ENCODE measurements at regions of chr7 and their contacts with region 1.

Region 1: GRCh38 chr7:101165075-101165957 is at the start of gene VGF:
- DNase-seq: peak; percentile 97
- H3K4me3 ChIP-seq: peak within 1 kb of the TSS; percentile 56 to 61
- H3K27ac ChIP-seq: peak within 1 kb of the TSS in 1 of 2 experiments; percentile 94; a peak in 3 of 4 replicates
- H3K4me1 ChIP-seq: peaks cover 36 to 66% of the 10 kb centered on the region in 2 experiments
- H3K27me3 ChIP-seq: no peaks in the 10 kb centered on the region
- CTCF ChIP-seq: no peak
- EP300 ChIP-seq: peak in 1 of 2 experiments; percentile 12; a peak in 1 of 4 replicates
- RAD21 ChIP-seq: no peak
- polyA plus RNA-seq, gene VGF: 17.4 and 54.3 TPM in 2 replicates

Region 2: GRCh38 chr7:101153969-101154692 is 11.2 kb before region 1 on chr7 and contains the start of gene AP1S1:
- CTCF ChIA-PET with region 1: interaction called, 20 read pairs
- POLR2A ChIA-PET with region 1: interaction called, 43 read pairs
- DNase-seq: peak; percentile 100
- H3K4me3 ChIP-seq: peak within 1 kb of the TSS; percentile 65 to 88
- H3K27ac ChIP-seq: peak within 1 kb of the TSS; percentile 38 to 84
- H3K4me1 ChIP-seq: peaks cover 7 to 15% of the 10 kb centered on the region in 2 experiments; a peak in 2 of 4 replicates
- H3K27me3 ChIP-seq: no peaks in the 10 kb centered on the region
- CTCF ChIP-seq: no peak
- EP300 ChIP-seq: peak in 1 of 2 experiments; percentile 52; a peak in 3 of 4 replicates
- RAD21 ChIP-seq: no peak; the same call in 1 of the 2 replicates
- polyA plus RNA-seq, gene AP1S1: 616 and 704 TPM in 2 replicates

Region 3: GRCh38 chr7:101179118-101179517 is 13.8 kb after region 1 on chr7:
- CTCF ChIA-PET with region 1: interaction called, 20 read pairs
- POLR2A ChIA-PET with region 1: interaction called, 21 read pairs
- DNase-seq: peak; percentile 81
- H3K4me3 ChIP-seq: peak overlapping the region; percentile 48 to 49; a peak in 3 of 4 replicates
- H3K27ac ChIP-seq: no peak overlapping the region; a peak in 1 of 4 replicates
- H3K4me1 ChIP-seq: peaks cover 0 to 16% of the 10 kb centered on the region in 2 experiments; a peak in 1 of 4 replicates
- H3K27me3 ChIP-seq: peaks cover 28% of the 10 kb centered on the region
- CTCF ChIP-seq: no peak
- EP300 ChIP-seq: no peak
- RAD21 ChIP-seq: no peak

Region 4: DNA sequence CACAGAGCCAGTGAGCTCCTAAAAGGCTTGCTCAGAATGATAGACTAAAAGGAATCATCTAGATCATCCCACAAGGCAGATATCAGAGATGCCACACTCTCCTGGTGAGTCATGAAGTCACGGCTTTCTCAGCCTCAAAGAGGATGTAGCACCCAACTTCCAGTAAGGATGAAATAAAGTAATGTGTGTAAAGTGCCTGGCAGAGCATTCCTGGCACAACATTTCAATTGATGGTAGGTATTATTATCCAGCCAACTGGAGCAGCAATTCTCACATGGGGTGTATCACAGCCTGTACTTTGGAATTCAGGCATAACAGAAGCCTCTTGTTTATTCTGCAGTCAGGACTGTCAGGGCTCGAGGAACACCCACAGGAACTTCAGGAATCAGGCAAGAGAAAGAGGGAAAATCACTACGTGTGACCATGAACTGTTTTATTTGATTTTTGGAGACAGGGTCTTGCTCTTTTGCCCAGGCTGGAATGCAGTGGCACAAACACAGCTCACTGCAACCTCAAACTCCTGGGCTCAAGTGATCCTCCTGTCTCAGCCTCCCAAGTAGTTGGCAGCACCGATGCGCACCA is 20.0 kb after region 1 on chr7:
- CTCF ChIA-PET with region 1: interaction called, 36 read pairs
- POLR2A ChIA-PET with region 1: interaction called, 21 read pairs
- DNase-seq: no peak
- H3K4me3 ChIP-seq: no peak overlapping the region
- H3K27ac ChIP-seq: peak overlapping the region in 1 of 2 experiments; percentile 37; a peak in 2 of 4 replicates
- H3K4me1 ChIP-seq: peaks cover 0 to 8% of the 10 kb centered on the region in 2 experiments; a peak in 1 of 4 replicates
- H3K27me3 ChIP-seq: peaks cover 6% of the 10 kb centered on the region; the same call in 1 of the 2 replicates
- CTCF ChIP-seq: no peak
- EP300 ChIP-seq: no peak
- RAD21 ChIP-seq: no peak

Region 5: DNA sequence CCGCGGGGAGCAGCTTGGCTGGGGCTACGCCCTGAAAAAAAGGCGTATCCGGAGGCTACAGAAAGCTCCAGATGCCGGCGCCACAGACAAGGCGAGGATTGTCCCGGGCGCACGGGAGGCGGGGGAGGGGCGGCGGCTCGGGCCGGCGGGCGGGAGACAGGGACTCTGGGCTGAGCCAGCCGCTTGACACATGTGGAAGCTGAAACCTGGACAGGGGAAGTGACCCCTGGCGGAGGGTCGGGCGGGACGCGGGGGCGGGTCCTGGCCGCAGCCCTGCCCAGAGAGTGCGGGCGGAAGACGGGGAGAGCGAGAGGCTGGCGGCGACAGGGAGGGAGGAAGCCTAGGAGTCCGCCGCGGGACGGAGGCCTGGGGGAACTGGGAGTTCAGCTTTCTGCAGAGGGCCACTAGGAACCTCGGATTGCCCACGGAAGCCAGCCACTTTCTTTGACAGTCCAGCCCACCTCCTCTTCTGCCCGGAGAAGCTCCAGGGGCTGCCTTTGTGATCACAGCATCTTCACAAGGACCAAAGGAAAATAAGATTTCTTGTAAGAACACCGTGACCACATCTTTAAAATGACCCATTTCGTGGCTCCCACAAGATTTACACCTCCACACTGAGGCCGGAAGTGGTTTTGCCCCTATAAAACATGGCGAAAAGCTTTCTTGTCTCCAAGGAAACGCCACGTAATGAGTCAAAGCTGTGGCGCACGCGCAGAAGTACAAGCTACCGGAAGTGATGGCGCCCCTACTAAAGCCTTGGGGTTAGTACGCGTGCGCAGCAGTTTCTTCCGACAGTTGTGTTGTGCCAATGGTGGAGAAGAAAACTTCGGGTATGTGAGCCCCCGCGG is 52.3 kb after region 1 on chr7 and contains the starts of genes PLOD3 and ZNHIT1:
- CTCF ChIA-PET with region 1: interaction called, 8 read pairs
- POLR2A ChIA-PET with region 1: interaction called, 28 read pairs
- DNase-seq: peak; percentile 100
- H3K4me3 ChIP-seq: peak within 1 kb of the TSS; percentile 66 to 84
- H3K27ac ChIP-seq: peak within 1 kb of the TSS; percentile 93 to 95
- H3K4me1 ChIP-seq: peaks cover 8 to 27% of the 10 kb centered on the region in 2 experiments; a peak in 2 of 4 replicates
- H3K27me3 ChIP-seq: no peaks in the 10 kb centered on the region
- CTCF ChIP-seq: peak; percentile 25; the same call in 1 of the 2 replicates
- EP300 ChIP-seq: peak in 1 of 2 experiments; percentile 35; a peak in 1 of 4 replicates
- RAD21 ChIP-seq: no peak
- polyA plus RNA-seq, gene PLOD3: 134 and 276 TPM in 2 replicates
- polyA plus RNA-seq, gene ZNHIT1: 71.6 and 101 TPM in 2 replicates

Region 6: DNA sequence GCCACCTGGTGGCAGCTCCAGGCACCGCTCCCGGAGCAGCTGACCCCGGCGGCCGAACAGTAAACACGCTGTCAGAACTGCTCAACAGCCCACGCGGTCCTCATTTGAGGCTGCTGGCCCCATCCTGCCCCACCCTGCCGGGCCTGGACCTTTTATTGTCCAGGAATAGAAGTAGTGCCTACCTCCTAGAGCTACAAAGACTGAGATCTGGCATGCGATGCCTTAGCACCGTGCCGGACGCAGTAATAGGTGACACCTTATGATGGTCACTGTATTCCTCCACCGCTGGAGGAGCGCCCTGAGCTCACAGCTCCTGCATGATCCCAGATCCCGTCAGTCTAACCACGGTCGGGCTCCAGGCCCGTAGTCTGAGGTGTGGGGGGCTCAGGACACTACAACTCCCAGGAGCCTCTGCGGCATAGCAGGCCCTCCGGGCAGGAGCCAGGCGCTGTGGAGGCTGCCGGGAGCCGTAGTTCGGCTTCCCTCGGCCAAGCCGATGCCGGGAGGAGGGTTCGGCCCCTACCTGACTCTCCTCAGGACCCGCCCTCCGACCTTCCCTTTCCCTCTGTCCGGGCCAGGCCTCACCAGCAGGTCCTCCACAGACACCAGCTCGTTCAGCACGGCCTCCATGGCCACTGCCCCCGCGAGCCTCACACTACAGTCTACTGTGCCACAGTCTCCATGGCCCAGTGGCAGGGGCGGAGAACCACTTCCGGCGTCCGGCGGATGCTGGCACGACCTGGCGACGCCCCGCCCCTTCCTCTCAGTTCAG is 79.2 kb after region 1 on chr7 and contains the start of gene FIS1:
- CTCF ChIA-PET with region 1: interaction called, 6 read pairs
- POLR2A ChIA-PET with region 1: interaction called, 13 read pairs
- DNase-seq: peak; percentile 98
- H3K4me3 ChIP-seq: peak within 1 kb of the TSS; percentile 77 to 89
- H3K27ac ChIP-seq: peak within 1 kb of the TSS; percentile 80 to 93
- H3K4me1 ChIP-seq: peaks cover 7 to 14% of the 10 kb centered on the region in 2 experiments; a peak in 1 of 4 replicates
- H3K27me3 ChIP-seq: no peaks in the 10 kb centered on the region
- CTCF ChIP-seq: peak; percentile 98
- EP300 ChIP-seq: no peak
- RAD21 ChIP-seq: no peak; the same call in 1 of the 2 replicates
- polyA plus RNA-seq, gene FIS1: 1,071 and 1,313 TPM in 2 replicates